ENCODE measurements at regions of chr10 and their contacts with region 1.

Region 1: GRCh38 chr10:6929148-6929830 is 349.2 kb upstream of the PRKCQ start:
- DNase-seq: no peak
- H3K4me3 Mint-ChIP-seq: no peak overlapping the region
- H3K27ac Mint-ChIP-seq: no peak overlapping the region
- H3K4me1 Mint-ChIP-seq: peaks cover 40% of the 10 kb centered on the region
- H3K27me3 Mint-ChIP-seq: no peaks in the 10 kb centered on the region

Region 2: GRCh38 chr10:6786579-6787031 is 142.7 kb before region 1 on chr10:
- CTCF ChIA-PET with region 1: no interaction called
- intact Hi-C with region 1: no loop called
- DNase-seq: no peak
- H3K4me3 Mint-ChIP-seq: no peak overlapping the region
- H3K27ac Mint-ChIP-seq: no peak overlapping the region
- H3K4me1 Mint-ChIP-seq: no peaks in the 10 kb centered on the region
- H3K27me3 Mint-ChIP-seq: peaks cover 2% of the 10 kb centered on the region

Region 3: DNA sequence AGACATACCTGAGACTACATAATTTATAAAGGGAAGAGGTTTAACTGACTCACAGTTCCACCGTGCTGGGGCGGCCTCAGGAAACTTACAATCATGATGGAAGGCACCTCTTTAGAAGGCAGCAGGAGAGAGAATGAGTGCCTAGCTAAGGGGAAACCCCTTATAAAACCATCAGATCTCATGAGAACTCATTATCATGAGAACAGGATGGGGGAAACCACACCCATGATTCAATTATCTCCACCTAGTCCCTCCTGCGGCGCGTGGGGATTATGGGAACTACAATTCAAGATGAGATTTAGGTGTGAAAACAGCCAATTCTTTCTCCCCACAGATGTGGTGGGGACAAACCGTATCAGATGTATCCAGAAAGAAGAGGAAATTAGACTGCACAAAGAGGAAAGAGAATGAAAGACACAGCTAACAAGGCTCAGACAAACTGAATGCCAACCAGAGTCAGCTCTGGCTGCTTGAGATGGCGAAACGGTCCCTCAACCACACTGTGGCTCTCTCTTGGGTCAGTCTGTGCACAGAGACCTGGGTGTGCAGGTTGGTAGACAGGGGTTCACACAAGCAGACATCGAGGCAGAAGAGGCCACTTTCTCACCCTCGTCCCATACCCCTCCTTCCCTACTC is 106.0 kb after region 1 on chr10:
- CTCF ChIA-PET with region 1: no interaction called
- intact Hi-C with region 1: loop called (anchors 5 kb)
- DNase-seq: peak; percentile 62
- H3K4me3 Mint-ChIP-seq: peak overlapping the region; percentile 25
- H3K27ac Mint-ChIP-seq: no peak overlapping the region
- H3K4me1 Mint-ChIP-seq: peaks cover 27% of the 10 kb centered on the region
- H3K27me3 Mint-ChIP-seq: no peaks in the 10 kb centered on the region

Region 4: DNA sequence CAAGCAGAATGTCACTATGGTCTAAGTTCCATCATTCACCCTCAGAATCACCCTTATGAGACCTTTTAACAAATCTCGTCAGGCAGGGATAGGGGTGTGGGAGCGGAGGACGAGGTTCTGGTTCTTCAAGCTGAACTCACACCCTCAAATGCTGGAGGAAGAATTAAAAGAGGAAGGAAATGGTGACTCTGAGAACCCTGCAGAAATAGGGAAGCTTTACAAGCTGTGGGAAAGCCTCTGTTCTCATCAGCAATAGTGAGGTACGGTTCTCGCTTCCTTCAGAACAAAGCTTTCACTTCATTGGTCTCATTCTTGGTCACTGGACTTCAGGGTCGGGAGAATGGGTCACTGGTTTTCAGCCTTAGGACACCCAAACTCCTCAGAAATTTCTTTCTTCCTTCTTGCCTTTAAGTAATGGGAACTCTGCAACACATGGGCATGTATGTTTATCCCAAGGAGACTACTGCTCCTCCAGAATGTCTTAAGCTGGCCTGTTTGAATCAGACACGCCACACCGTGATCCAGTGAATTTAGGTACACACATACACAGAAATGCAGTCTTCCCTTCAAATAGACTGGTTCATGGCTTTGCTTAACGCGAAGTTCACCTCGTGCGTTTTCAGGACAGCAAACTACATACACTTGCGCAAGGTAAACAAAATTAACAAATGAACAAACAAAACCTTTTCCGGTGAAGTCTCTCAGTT is 255.5 kb after region 1 on chr10:
- CTCF ChIA-PET with region 1: no interaction called
- intact Hi-C with region 1: loop called (anchors 5 kb)
- DNase-seq: no peak
- H3K4me3 Mint-ChIP-seq: peak overlapping the region; percentile 1
- H3K27ac Mint-ChIP-seq: peak overlapping the region; percentile 81
- H3K4me1 Mint-ChIP-seq: peaks cover 52% of the 10 kb centered on the region
- H3K27me3 Mint-ChIP-seq: no peaks in the 10 kb centered on the region